Esophagus muscularis mucosa (tissue), 4 donors: ENCODE measurements at regions of chr14 and their contacts with region 1.

Region 1: GRCh38 chr14:58107947-58108552 is 44.0 kb downstream of the ARMH4 start:
- DNase-seq: no peak
- H3K4me3 ChIP-seq: no peak overlapping the region
- H3K27ac ChIP-seq: no peak overlapping the region
- H3K4me1 ChIP-seq: peaks cover 0 to 12% (median 6%) of the 10 kb centered on the region in 4 donors
- H3K27me3 ChIP-seq: no peaks in the 10 kb centered on the region
- CTCF ChIP-seq: peak; percentile 80 to 84 (median 81)
- EP300 ChIP-seq: no peak
- POLR2A ChIP-seq: no peak

Region 2: GRCh38 chr14:58166005-58166983 is 58.2 kb after region 1 on chr14:
- intact Hi-C with region 1: loop called (anchors 1 kb)
- DNase-seq: peak; percentile 93
- H3K4me3 ChIP-seq: no peak overlapping the region
- H3K27ac ChIP-seq: no peak overlapping the region
- H3K4me1 ChIP-seq: peaks cover 0 to 13% (median 0%) of the 10 kb centered on the region in 4 donors
- H3K27me3 ChIP-seq: no peaks in the 10 kb centered on the region
- CTCF ChIP-seq: peak; percentile 68 to 90 (median 80)
- EP300 ChIP-seq: no peak
- POLR2A ChIP-seq: no peak